Activated CD4-positive, alpha-beta memory T cell treated with anti-CD3 and anti-CD28 coated beads for 36 hours (primary cell): ENCODE measurements at regions of chr13 and their contacts with region 1.

Region 1: GRCh38 chr13:77751513-77752456 is 54.3 kb downstream of the SLAIN1 start:
- DNase-seq: peak; percentile 46
- H3K4me3 Mint-ChIP-seq: no peak overlapping the region
- H3K27ac Mint-ChIP-seq: no peak overlapping the region
- H3K4me1 Mint-ChIP-seq: peaks cover 13% of the 10 kb centered on the region
- H3K27me3 Mint-ChIP-seq: no peaks in the 10 kb centered on the region

Region 2: DNA sequence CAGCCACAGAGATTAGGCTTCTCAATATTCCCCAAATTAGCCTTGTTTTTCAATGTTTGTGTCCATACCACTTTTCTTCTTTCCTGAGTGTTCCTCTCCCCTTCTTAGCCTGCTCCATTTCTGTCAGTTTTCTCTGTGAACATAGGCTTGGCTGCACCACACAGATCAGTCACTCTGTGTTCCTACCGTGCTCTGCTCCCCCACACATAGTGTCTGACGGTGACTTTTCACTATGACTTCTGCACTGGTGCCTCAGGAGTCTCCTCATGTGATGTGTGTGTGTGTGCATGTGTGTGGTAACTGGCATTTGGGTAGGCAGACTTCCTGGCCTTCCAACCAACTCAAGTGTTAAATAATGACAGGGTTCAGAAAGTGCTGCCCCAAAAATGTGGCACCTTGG is 377.0 kb before region 1 on chr13:
- CTCF ChIA-PET with region 1: no interaction called
- POLR2A ChIA-PET with region 1: no interaction called
- intact Hi-C with region 1: no loop called
- DNase-seq: peak; percentile 36
- H3K4me3 Mint-ChIP-seq: no peak overlapping the region
- H3K27ac Mint-ChIP-seq: no peak overlapping the region
- H3K4me1 Mint-ChIP-seq: peaks cover 4% of the 10 kb centered on the region
- H3K27me3 Mint-ChIP-seq: no peaks in the 10 kb centered on the region

Region 3: GRCh38 chr13:77492982-77493381 is 258.8 kb before region 1 on chr13:
- CTCF ChIA-PET with region 1: interaction called, 4 read pairs
- POLR2A ChIA-PET with region 1: no interaction called
- intact Hi-C with region 1: loop called (anchors 1 kb)
- DNase-seq: no peak
- H3K4me3 Mint-ChIP-seq: no peak overlapping the region
- H3K27ac Mint-ChIP-seq: no peak overlapping the region
- H3K4me1 Mint-ChIP-seq: no peaks in the 10 kb centered on the region
- H3K27me3 Mint-ChIP-seq: peaks cover 2% of the 10 kb centered on the region

Region 4: DNA sequence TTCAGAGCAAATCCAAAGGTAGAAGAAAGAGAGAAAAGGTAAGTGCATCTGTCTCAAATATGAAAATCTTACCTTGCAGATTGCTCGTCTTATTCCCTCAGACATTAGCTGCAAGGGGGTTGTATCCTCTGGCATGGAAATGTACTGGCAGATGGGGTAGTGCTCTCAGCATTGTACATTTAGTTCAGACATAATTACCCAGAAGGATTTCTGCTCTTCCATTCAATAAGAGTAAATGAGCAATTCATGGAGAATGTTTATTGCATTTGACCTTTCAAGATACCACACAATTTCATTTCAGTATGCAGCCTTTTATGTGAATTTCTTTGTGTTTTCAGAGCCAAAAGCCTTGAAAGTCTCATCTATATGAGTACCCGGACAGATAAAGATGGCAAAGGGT is 152.4 kb before region 1 on chr13:
- CTCF ChIA-PET with region 1: interaction called, 139 read pairs
- POLR2A ChIA-PET with region 1: no interaction called
- intact Hi-C with region 1: no loop called
- DNase-seq: no peak
- H3K4me3 Mint-ChIP-seq: no peak overlapping the region
- H3K27ac Mint-ChIP-seq: no peak overlapping the region
- H3K4me1 Mint-ChIP-seq: no peaks in the 10 kb centered on the region
- H3K27me3 Mint-ChIP-seq: peaks cover 3% of the 10 kb centered on the region

Region 5: DNA sequence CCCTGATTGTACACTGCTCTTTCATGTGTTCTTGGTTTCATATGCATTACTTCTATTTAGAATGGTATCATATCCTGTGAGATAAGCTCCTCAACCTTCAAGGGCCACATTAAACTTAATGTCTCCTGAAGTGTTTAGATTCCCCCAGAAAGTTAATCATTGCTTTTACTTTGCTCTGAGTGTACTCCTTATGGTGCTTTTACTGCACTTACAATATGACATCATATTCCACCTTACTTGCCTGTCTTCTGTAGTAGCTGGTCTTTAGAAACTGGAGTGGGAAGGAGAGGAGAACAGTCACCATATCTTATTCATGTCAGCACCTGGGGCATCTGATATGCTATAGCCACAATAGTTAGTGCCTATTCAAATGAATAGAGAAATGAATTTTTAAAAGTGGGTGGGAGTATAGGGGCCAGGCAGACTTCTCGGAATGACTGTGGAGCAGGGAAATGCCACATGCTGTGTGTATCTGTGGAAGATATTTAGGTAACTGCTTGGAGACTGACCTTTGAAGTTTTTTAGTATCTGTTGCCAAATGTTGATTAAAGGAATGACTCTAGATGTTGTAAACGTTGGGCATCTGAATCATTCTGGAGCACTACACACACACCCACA is 14.1 kb before region 1 on chr13:
- CTCF ChIA-PET with region 1: interaction called, 6 read pairs
- POLR2A ChIA-PET with region 1: no interaction called
- intact Hi-C with region 1: loop called (anchors 2 kb)
- DNase-seq: peak; percentile 54
- H3K4me3 Mint-ChIP-seq: no peak overlapping the region
- H3K27ac Mint-ChIP-seq: no peak overlapping the region
- H3K4me1 Mint-ChIP-seq: peaks cover 17% of the 10 kb centered on the region
- H3K27me3 Mint-ChIP-seq: no peaks in the 10 kb centered on the region